Sciatic nerve (tissue), 2 donors: ENCODE measurements at regions of chr1 and their contacts with region 1.

Region 1: GRCh38 chr1:15847100-15847892 is at the start of gene SPEN:
- DNase-seq: peak; percentile 98
- ATAC-seq: peak; percentile 93
- total RNA-seq, gene SPEN: 97.7 TPM

Region 2: GRCh38 chr1:15640667-15641066 is 206.6 kb before region 1 on chr1:
- intact Hi-C with region 1: no loop called
- DNase-seq: no peak
- ATAC-seq: no peak

Region 3: GRCh38 chr1:15825800-15826199 is 21.5 kb before region 1 on chr1:
- intact Hi-C with region 1: no loop called
- DNase-seq: no peak
- ATAC-seq: peak; percentile 50

Region 4: DNA sequence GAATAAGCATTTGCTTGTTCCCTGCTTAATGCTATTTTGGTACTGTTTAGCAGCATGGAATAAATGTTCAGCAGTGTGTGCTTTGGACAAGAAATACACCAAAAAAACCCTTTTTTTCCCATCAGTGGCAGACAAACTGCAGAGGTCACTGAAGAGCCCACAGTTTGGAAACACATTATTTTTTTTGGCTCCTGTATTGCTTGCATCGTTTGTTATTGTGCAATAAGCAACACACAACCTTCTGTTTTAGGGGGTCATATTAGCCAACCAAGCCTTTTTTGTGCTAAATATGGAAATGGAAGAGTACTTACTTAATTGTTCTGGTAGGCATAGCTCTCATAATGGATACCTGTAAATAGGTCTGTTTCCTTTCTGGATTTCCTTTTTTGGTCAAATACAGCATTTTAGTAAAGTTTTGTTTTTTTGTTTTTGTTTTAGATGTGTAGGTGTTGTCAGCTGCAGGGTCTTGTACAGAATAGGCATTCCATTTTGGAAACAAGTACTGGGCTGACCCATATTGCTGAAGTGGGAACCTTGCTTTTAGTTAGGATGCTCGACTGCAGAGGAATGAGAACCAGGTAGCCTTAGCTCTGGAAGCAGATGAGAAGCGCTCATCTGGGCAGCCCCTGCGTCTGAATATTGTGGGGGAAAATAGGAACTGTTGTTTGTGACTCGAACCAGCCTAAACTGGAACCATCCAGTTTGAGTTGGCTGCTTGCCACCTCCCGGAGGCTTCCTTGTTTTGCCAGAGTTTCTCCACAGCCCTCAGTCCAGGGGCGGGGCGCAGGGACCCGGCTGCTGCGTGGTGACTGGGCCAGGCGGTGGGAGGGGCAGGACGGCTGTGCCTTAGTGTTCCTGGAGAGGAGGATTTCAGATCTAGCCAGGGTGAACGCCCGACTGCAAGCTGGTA is 38.7 kb after region 1 on chr1:
- intact Hi-C with region 1: loop called (anchors 2 kb)
- DNase-seq: peak; percentile 99
- ATAC-seq: peak; percentile 97

Region 5: DNA sequence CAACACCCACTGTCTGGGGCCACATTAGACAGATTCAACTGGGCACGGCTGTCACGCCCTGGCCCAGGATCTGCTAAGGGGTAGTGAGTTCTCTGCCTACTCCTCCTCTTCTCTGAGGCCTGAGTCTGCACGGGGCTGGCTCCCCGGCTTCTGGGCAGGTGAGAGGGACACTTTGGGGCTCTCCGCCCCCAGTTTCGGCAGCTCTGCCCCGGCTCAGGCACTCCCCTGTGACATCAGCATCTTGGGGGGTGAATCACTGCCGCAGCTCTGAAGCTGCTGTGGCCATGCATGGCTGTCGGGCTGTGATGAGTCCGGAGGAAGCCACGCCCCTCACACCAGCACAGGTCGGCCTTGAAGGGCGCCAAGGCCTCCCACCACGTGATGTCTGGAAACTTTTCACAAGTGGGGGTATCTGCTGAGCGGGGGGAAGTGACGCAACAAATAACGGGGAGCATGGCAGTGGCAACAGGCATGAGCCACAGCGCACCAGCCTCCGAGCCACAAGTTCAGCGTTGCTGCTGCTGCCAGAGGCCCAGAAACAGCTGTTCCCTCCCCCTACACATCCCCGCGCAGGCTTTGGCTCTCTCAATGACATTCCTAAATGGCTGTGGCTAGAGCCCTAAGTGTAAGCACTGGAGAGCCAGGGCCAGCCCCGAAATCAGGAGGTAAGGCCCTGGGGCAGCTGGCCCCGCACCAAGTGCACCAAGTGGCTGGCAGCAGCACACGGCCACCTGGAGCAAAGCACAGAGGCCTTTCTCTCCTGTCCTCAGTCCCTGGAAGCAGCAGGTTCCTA is 102.4 kb after region 1 on chr1:
- intact Hi-C with region 1: loop called (anchors 10 kb)
- DNase-seq: peak; percentile 89
- ATAC-seq: peak; percentile 89

Region 6: GRCh38 chr1:16386454-16387113 is 539.3 kb after region 1 on chr1:
- intact Hi-C with region 1: no loop called
- DNase-seq: no peak
- ATAC-seq: peak; percentile 65